ENCODE measurements at regions of chr5 and their contacts with region 1.

Region 1: DNA sequence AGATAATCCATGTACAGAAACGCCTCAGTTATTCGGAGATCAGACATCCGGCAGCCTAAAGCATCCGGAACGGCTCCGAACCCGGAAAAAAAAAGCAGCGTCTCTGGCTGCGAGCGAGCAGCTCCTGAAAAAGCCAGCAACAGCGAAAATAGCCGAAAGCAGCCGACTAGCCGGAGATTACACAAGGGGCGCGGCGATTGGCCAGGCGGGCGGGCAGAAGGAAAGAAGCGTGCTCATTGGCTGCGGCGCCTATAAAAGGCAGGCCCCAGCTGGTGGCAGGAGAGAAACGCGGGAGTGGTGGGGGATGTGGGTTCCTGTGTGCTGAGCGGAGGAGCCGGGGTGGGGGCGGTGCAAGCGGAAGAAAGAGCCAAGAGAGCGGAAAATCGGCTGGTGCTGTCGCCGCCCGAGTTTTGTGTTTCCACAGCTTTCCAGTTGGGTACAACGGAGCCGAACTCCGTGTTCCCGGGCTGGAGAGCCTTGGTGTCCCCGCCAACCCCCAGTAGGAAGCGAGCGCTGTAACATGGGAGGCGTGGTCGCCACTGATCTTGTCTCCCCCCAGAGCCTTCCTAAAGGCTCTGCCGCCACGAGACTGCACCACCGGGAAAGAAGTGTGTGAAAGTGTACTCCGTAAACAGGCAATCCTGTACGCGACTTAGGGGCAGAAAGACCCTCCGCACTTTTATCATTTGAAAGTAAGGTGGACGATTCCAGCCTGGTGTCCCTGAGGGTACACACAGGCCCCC is at the start of gene ARL15:
- DNase-seq: peak; percentile 96
- ATAC-seq: peak; percentile 95
- H3K4me3 ChIP-seq: peak within 1 kb of the TSS; percentile 62
- H3K27ac ChIP-seq: peak within 1 kb of the TSS; percentile 81
- H3K4me1 ChIP-seq: no peaks in the 10 kb centered on the region; the same call in 1 of the 2 replicates
- H3K27me3 ChIP-seq: peaks cover under 1% of the 10 kb centered on the region; the same call in 1 of the 2 replicates
- CTCF ChIP-seq: no peak
- POLR2A ChIP-seq: peak; percentile 99
- RAD21 ChIP-seq: no peak
- total RNA-seq, gene ARL15: 19.2 TPM in 2 replicates

Region 2: DNA sequence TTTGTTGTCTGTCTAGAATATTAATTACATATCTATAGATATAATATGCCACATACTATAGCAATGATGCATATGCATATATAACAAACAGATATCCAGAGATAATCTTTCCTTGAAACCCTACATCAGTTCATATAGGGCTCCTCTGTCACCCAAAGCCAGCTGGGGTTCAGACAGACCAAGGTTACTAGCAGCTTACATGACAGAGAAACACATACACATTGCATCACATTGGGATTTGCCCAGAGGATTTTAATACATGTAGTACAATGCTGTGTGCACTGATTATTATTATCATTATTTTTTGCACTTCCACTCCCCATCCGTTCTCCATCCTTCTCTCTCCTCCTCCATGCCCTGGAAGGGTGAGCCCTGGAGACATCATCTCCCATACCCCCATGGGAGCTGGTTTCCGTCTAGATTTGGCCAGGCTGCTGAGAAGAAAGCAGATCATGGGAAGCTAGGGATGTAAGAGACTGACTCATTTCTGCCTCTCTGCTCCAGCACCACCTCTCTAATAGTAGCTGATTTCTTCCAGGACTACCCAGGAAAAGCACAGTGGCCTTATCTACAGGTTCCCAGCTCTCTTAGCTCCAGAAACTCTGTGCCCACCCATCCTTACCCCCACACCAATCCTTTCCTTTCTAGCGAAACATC is 806.9 kb before region 1 on chr5:
- CTCF ChIA-PET with region 1: no interaction called
- POLR2A ChIA-PET with region 1: no interaction called
- dilution Hi-C with region 1: no loop called
- in situ Hi-C with region 1: no loop called
- intact Hi-C with region 1: no loop called
- DNase-seq: peak; percentile 27
- ATAC-seq: peak; percentile 61
- H3K4me3 ChIP-seq: no peak overlapping the region
- H3K27ac ChIP-seq: no peak overlapping the region
- H3K4me1 ChIP-seq: no peaks in the 10 kb centered on the region
- H3K27me3 ChIP-seq: no peaks in the 10 kb centered on the region
- CTCF ChIP-seq: no peak
- POLR2A ChIP-seq: no peak
- RAD21 ChIP-seq: no peak

Region 3: GRCh38 chr5:54243473-54244080 is 67.0 kb before region 1 on chr5:
- CTCF ChIA-PET with region 1: interaction called, 13 read pairs
- POLR2A ChIA-PET with region 1: no interaction called
- dilution Hi-C with region 1: no loop called
- in situ Hi-C with region 1: no loop called
- intact Hi-C with region 1: loop called (anchors 5 kb)
- DNase-seq: peak; percentile 47
- ATAC-seq: peak; percentile 76
- H3K4me3 ChIP-seq: no peak overlapping the region
- H3K27ac ChIP-seq: no peak overlapping the region
- H3K4me1 ChIP-seq: no peaks in the 10 kb centered on the region
- H3K27me3 ChIP-seq: no peaks in the 10 kb centered on the region
- CTCF ChIP-seq: peak; percentile 83
- POLR2A ChIP-seq: no peak
- RAD21 ChIP-seq: peak; percentile 86

Region 4: GRCh38 chr5:54254482-54255198 is 56.0 kb before region 1 on chr5:
- CTCF ChIA-PET with region 1: interaction called, 3 read pairs
- POLR2A ChIA-PET with region 1: interaction called, 3 read pairs
- dilution Hi-C with region 1: no loop called
- in situ Hi-C with region 1: no loop called
- intact Hi-C with region 1: loop called (anchors 5 kb)
- DNase-seq: no peak
- ATAC-seq: no peak
- H3K4me3 ChIP-seq: no peak overlapping the region
- H3K27ac ChIP-seq: no peak overlapping the region
- H3K4me1 ChIP-seq: no peaks in the 10 kb centered on the region
- H3K27me3 ChIP-seq: no peaks in the 10 kb centered on the region
- CTCF ChIP-seq: no peak
- POLR2A ChIP-seq: no peak
- RAD21 ChIP-seq: 0 out of 2 replicates have a peak, but pooled peaks have one; percentile 7

Region 5: DNA sequence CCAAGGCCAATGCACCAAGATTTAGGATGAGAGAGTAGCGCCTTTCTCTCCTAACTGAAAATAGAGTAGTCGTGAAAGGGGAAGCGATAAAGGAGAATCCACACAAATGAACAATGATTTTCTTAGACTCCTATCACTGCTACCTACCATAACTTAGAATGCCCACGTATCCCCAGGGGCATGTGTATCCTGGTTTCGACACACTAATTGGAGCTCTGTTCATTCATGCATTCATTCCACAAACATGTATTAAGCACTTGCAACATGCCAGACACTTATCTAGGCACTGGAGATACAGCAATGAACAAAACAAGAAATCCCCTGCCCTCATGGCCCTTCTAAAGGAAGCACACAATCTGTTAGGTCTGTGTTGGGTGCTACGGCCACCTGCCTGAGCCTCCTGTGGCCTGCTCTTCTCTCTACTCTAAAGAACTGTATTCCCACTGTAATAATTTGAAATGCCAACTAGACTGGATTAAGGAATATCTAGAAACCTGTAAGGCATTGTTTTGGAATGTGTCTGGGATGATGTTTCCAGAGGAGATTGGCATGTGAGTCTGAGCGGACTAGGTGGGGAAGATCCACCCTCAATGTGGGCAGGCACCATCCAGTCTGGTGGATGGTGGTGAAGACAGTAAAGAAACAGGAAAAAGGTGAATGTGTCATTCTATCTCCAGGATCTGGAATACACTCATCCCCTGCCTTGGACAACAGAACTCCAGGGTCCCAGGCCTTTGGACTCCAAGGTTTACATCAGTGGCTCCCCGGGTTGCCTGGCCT is 40.1 kb before region 1 on chr5:
- CTCF ChIA-PET with region 1: no interaction called
- POLR2A ChIA-PET with region 1: no interaction called
- dilution Hi-C with region 1: no loop called
- in situ Hi-C with region 1: no loop called
- intact Hi-C with region 1: no loop called
- DNase-seq: no peak
- ATAC-seq: no peak
- H3K4me3 ChIP-seq: no peak overlapping the region
- H3K27ac ChIP-seq: no peak overlapping the region
- H3K4me1 ChIP-seq: no peaks in the 10 kb centered on the region
- H3K27me3 ChIP-seq: no peaks in the 10 kb centered on the region
- CTCF ChIP-seq: no peak
- POLR2A ChIP-seq: no peak
- RAD21 ChIP-seq: no peak

Region 6: DNA sequence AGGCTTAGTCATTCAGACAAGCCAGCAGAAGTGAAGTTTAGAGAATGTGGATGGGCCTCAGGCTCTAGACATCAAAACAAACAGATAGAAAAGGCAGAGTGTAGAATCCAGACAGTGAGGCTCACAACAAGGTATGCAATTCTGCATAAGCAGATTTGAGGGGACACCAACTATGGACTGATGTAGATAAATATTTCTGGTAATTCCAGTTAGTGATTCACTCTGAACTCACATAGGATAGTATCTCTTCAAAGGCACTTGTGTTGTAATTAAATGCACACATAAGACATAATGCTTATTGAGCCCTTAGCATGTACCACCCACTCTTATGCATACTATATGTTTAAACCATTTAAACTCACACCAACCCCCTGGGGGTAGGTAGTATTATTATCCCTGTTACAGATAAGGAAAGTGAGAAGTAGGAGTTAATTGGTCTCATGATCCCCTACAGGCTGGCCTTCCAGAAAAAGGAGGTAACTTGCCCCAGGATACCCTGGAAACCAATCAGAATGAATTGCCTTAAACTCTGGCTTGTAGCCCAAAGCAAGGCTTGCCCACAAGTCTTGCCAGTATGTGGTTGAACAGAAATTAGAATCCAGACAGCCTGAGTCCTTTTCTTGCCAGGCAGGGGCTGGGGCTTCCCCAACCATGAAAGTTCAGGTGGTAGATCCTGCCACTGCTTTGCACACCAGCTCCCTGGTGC is 105.4 kb after region 1 on chr5:
- CTCF ChIA-PET with region 1: interaction called, 13 read pairs
- POLR2A ChIA-PET with region 1: no interaction called
- dilution Hi-C with region 1: no loop called
- in situ Hi-C with region 1: no loop called
- intact Hi-C with region 1: loop called (anchors 1 kb)
- DNase-seq: peak; percentile 42
- ATAC-seq: peak; percentile 88
- H3K4me3 ChIP-seq: no peak overlapping the region
- H3K27ac ChIP-seq: no peak overlapping the region
- H3K4me1 ChIP-seq: peaks cover 3% of the 10 kb centered on the region
- H3K27me3 ChIP-seq: peaks cover 8% of the 10 kb centered on the region
- CTCF ChIP-seq: no peak
- POLR2A ChIP-seq: no peak
- RAD21 ChIP-seq: no peak

Region 7: DNA sequence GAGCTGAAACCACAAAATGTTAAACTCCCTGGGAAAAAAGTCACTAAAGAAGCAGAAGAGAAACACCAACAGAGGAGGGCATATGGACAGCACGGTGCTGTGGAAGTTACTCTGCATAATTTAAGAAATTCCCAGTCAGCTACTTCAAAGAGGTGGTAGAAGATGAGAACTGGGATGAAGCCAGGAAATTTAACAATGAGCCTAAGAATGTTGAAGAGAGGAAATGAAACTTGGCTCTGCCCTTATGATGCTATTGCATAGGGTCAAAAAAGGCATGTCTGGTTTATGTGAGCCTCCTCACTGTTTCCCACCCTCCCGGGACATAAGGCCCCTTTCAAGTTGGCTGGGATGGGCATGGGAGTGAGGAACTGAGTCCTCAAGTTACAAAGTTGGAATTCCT is 181.6 kb after region 1 on chr5:
- CTCF ChIA-PET with region 1: interaction called, 6 read pairs
- POLR2A ChIA-PET with region 1: no interaction called
- dilution Hi-C with region 1: no loop called
- in situ Hi-C with region 1: no loop called
- intact Hi-C with region 1: loop called (anchors 2 kb)
- DNase-seq: no peak
- ATAC-seq: no peak
- H3K4me3 ChIP-seq: no peak overlapping the region
- H3K27ac ChIP-seq: no peak overlapping the region
- H3K4me1 ChIP-seq: no peaks in the 10 kb centered on the region; the same call in 1 of the 2 replicates
- H3K27me3 ChIP-seq: peaks cover 14% of the 10 kb centered on the region; the same call in 1 of the 2 replicates
- CTCF ChIP-seq: no peak
- POLR2A ChIP-seq: no peak
- RAD21 ChIP-seq: no peak

Region 8: DNA sequence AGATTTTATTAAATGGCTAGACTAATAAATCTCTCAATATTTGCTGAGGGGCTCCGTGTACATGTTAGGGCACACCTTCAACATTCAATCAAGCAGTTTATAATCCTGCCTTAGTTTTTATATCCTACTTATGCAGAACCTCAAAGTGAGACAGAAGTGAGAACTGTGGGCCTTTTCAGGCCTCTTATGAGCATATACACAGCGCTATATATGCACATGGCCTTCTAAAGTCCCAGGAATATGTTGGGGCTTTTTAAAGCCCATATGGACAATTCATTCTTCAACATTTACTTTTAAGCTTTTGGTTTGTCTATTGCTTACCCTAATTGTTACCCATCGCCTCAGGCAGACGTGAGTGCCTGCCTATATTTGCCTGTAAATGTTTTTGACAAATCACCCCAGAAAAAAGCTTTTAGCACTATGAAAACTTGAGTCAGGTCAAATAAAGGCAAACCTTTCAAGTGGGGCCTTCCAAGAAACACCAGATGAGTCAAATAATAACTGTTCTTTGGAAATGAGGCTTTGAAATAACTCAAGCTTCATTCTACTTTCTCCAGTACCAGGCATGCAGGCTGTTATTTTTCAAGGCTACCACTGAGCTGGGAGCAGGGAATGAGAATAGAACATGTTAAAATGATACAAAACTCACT is 616.6 kb after region 1 on chr5:
- CTCF ChIA-PET with region 1: no interaction called
- POLR2A ChIA-PET with region 1: no interaction called
- dilution Hi-C with region 1: no loop called
- in situ Hi-C with region 1: no loop called
- intact Hi-C with region 1: no loop called
- DNase-seq: no peak
- ATAC-seq: no peak
- H3K4me3 ChIP-seq: no peak overlapping the region
- H3K27ac ChIP-seq: no peak overlapping the region
- H3K4me1 ChIP-seq: no peaks in the 10 kb centered on the region
- H3K27me3 ChIP-seq: peaks cover 36% of the 10 kb centered on the region
- CTCF ChIP-seq: no peak
- POLR2A ChIP-seq: no peak
- RAD21 ChIP-seq: no peak